Endothelial cell of umbilical vein (primary cell): ENCODE measurements at regions of chr22 and their contacts with region 1.

Region 1: DNA sequence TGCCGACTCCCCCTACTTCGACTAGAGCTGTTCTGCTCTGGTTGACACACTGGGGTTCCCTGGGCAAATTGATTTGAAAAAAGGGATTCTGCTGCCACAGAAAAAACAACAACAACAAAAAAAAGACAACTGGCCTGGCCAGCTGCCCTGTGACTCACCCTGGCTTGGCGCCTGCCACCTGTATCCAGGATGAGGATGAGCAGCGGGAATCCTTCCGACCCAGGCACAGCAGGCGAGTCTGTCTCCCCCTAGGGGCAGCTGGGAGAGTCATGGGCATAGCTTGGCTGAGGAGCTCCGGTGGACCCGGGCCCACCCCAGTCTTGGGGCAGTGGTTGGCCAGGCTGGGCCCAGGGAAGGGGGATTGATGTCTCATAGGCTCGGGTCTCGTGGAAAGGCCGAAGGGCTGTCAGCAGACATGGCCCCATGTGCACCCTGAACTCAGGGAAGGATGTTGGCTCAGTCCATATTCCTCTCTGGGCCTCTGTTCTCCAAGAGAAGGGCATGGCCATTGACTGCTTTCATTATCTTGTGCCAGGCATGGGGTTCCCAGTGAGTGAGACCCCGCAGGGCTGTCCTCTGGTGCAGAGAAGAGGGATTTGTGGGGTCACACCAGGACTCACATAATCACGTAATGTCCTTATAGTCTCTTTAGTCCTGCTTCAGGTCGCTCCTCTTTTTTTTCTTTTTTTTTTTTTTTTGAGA is 10.4 kb upstream of the SUN2 start:
- DNase-seq: peak; percentile 30
- H3K4me3 ChIP-seq: no peak overlapping the region
- H3K27ac ChIP-seq: no peak overlapping the region
- H3K4me1 ChIP-seq: no peaks in the 10 kb centered on the region
- H3K27me3 ChIP-seq: no peaks in the 10 kb centered on the region
- CTCF ChIP-seq: peak; percentile 84 to 90
- POLR2A ChIP-seq: no peak

Region 2: GRCh38 chr22:38631724-38632123 is 134.5 kb before region 1 on chr22:
- CTCF ChIA-PET with region 1: no interaction called
- POLR2A ChIA-PET with region 1: no interaction called
- dilution Hi-C with region 1: no loop called
- intact Hi-C with region 1: no loop called
- DNase-seq: no peak
- H3K4me3 ChIP-seq: no peak overlapping the region
- H3K27ac ChIP-seq: no peak overlapping the region
- H3K4me1 ChIP-seq: no peaks in the 10 kb centered on the region
- H3K27me3 ChIP-seq: no peaks in the 10 kb centered on the region
- CTCF ChIP-seq: no peak
- POLR2A ChIP-seq: no peak

Region 3: DNA sequence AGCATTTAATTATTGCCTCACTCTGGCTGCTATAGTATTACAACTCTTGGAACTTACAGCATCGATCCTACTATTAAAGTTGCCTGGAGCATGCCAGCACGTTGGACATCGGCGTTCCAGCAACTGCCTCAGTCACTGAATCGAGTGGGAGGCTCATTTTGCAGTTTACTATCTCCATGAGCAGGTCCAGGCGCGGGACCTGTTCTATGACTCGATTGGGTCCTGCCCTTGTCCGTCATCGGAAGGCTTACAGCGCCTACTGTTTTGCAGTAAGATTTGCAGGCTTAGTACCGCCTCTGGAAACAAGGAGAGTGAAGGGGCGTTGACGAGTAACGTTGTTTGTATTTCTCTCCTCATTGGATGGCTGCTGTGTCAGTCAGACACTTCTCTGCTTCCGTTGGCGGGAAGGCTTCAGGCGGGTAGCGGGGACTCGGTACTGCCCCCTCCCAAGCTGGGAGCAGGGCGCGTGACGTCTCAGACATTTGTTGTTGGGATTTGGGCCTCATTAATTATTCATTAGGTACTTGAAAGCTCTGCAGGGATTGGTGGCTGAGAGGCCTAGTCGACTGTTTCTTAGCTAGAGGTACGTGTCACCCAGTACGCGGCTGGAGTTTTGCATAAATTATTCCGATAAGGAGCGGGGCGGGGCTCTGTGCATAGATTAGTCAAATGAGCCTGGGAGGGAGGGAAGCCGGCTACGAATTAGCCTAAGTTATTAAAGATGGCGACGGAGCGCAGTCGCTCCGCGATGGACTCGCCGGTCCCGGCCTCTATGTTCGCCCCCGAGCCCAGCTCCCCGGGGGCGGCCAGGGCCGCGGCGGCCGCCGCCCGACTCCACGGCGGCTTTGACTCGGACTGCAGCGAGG is 60.8 kb before region 1 on chr22 and contains the start of gene GTPBP1:
- CTCF ChIA-PET with region 1: no interaction called
- POLR2A ChIA-PET with region 1: no interaction called
- dilution Hi-C with region 1: no loop called
- intact Hi-C with region 1: no loop called
- DNase-seq: peak; percentile 100
- H3K4me3 ChIP-seq: peak within 1 kb of the TSS; percentile 84 to 95 (median 89)
- H3K27ac ChIP-seq: peak within 1 kb of the TSS; percentile 67
- H3K4me1 ChIP-seq: peaks cover 33% of the 10 kb centered on the region
- H3K27me3 ChIP-seq: no peaks in the 10 kb centered on the region
- CTCF ChIP-seq: no peak
- POLR2A ChIP-seq: peak; percentile 85
- total RNA-seq, gene GTPBP1: 43.9 and 50.3 TPM in 2 replicates

Region 4: GRCh38 chr22:38755911-38756532 is 10.2 kb before region 1 on chr22 and contains the start of gene SUN2:
- CTCF ChIA-PET with region 1: interaction called, 29 read pairs
- POLR2A ChIA-PET with region 1: no interaction called
- dilution Hi-C with region 1: no loop called
- intact Hi-C with region 1: no loop called
- DNase-seq: peak; percentile 88
- H3K4me3 ChIP-seq: peak within 1 kb of the TSS; percentile 55 to 74 (median 58)
- H3K27ac ChIP-seq: peak within 1 kb of the TSS; percentile 63
- H3K4me1 ChIP-seq: peaks cover 22% of the 10 kb centered on the region
- H3K27me3 ChIP-seq: no peaks in the 10 kb centered on the region
- CTCF ChIP-seq: no peak
- POLR2A ChIP-seq: peak; percentile 36
- total RNA-seq, gene SUN2: 133 and 137 TPM in 2 replicates

Region 5: DNA sequence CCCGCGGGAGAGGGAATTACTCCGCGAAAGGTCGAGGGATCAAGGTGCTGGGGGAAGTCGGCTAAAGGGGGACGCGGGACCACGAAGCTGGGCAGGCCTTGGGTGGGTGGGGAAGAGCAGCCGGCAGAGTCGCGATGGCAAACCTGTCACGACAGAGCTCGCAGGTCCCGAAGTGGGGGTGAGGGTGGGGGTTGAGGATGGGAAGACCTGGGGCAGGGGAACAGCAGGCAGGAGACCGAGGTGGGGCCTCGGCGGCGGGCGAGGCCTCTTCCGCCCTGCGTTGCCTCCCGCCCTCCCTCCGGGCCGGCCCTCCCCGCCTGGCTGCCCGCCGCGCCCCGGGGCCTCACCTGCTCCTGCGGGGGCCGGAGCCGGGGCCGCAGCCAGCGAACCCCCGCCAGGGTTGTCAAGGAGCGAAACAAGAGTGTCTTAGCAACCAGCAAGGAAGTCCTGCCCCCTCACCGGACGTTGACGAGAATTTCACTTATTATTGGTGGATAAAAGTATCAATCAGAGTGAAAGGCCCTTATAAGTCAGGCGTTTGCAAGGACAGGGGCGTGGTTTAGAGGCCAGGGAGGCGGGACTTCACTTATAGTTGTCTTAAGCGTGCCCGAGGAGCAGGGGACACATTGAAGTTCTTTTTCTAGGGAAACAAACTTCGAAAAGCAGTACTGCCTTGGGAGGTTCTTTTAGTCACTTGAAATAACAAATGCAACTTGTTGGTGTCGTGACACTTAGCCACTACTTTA is 27.7 kb after region 1 on chr22 and contains the start of gene DNAL4:
- CTCF ChIA-PET with region 1: interaction called, 23 read pairs
- POLR2A ChIA-PET with region 1: no interaction called
- dilution Hi-C with region 1: no loop called
- intact Hi-C with region 1: no loop called
- DNase-seq: peak; percentile 99
- H3K4me3 ChIP-seq: peak within 1 kb of the TSS; percentile 60 to 86 (median 72)
- H3K27ac ChIP-seq: peak within 1 kb of the TSS; percentile 16
- H3K4me1 ChIP-seq: peaks cover 10% of the 10 kb centered on the region
- H3K27me3 ChIP-seq: peaks cover 0 to 2% of the 10 kb centered on the region in 2 experiments
- CTCF ChIP-seq: no peak
- POLR2A ChIP-seq: peak; percentile 32
- total RNA-seq, gene DNAL4: 12.2 and 12.9 TPM in 2 replicates

Region 6: DNA sequence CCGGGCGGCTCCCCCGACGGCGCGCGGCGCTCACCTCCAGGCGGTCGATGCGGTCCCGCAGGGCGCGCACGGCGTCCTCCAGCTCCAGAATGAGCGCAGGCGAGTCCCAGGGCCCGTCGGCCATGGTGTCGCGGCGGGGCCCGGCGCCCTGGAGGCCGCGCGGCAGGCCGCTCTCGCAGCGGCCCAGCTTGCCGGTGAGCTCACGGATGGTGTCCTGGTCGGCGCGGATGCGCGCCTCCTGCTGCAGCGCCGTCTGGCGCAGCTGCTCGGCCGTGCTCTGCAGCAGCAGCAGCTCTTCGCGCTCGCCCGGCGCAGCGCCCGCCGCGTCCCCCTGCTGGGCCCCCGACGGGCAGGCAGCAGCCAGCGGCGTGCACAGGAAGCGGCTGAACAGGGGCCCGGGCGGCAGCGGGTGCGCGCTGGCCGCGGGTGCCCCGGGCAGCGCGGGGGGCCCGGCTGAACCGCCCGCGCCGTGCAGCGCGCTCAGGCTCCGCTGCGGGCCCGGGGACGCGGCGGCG is 77.0 kb after region 1 on chr22:
- CTCF ChIA-PET with region 1: interaction called, 198 read pairs
- POLR2A ChIA-PET with region 1: no interaction called
- dilution Hi-C with region 1: no loop called
- intact Hi-C with region 1: loop called (anchors 1 kb)
- DNase-seq: peak; percentile 64
- H3K4me3 ChIP-seq: no peak overlapping the region
- H3K27ac ChIP-seq: no peak overlapping the region
- H3K4me1 ChIP-seq: peaks cover 3% of the 10 kb centered on the region
- H3K27me3 ChIP-seq: peaks cover 20 to 29% of the 10 kb centered on the region in 2 experiments
- CTCF ChIP-seq: peak; percentile 21 to 40
- POLR2A ChIP-seq: no peak

Region 7: DNA sequence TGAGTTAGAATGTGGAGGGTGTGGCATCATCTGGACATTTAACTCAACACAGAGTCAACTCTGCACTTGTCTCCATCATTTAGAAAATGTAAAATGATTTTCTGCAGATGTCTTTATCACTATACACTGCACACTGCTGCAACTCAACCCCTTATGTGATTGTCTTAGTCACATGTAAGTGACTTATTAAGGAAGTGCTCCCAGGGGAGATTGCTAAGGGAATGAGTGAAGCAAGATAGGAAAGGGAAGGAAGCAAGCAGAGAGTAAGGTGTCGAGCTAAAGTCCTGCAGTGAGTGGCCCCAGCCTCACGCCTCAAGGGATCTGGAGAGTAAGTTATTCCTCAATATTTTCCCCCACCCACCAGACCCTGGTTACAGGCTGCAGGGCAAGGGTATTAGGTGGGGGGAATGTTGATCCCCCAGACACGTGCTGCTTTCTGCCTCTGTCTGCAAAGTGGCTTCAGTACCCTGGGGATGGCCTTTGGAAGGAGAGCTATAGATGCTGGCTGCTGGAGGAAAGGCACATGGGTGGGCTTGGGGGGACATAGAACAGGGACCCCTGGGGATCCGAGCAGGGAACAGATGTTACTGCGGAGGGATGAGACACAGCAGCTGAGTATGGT is 113.0 kb after region 1 on chr22:
- CTCF ChIA-PET with region 1: interaction called, 13 read pairs
- POLR2A ChIA-PET with region 1: no interaction called
- dilution Hi-C with region 1: no loop called
- intact Hi-C with region 1: no loop called
- DNase-seq: no peak
- H3K4me3 ChIP-seq: no peak overlapping the region
- H3K27ac ChIP-seq: no peak overlapping the region
- H3K4me1 ChIP-seq: no peaks in the 10 kb centered on the region
- H3K27me3 ChIP-seq: peaks cover 26 to 27% of the 10 kb centered on the region in 2 experiments
- CTCF ChIP-seq: no peak
- POLR2A ChIP-seq: no peak

Region 8: GRCh38 chr22:39021552-39022250 is 255.5 kb after region 1 on chr22:
- CTCF ChIA-PET with region 1: interaction called, 10 read pairs
- POLR2A ChIA-PET with region 1: no interaction called
- dilution Hi-C with region 1: no loop called
- intact Hi-C with region 1: no loop called
- DNase-seq: no peak
- H3K4me3 ChIP-seq: peak overlapping the region; percentile 1 to 42 (median 23)
- H3K27ac ChIP-seq: peak overlapping the region; percentile 47
- H3K4me1 ChIP-seq: no peaks in the 10 kb centered on the region
- H3K27me3 ChIP-seq: no peaks in the 10 kb centered on the region
- CTCF ChIP-seq: no peak
- POLR2A ChIP-seq: no peak

Region 9: DNA sequence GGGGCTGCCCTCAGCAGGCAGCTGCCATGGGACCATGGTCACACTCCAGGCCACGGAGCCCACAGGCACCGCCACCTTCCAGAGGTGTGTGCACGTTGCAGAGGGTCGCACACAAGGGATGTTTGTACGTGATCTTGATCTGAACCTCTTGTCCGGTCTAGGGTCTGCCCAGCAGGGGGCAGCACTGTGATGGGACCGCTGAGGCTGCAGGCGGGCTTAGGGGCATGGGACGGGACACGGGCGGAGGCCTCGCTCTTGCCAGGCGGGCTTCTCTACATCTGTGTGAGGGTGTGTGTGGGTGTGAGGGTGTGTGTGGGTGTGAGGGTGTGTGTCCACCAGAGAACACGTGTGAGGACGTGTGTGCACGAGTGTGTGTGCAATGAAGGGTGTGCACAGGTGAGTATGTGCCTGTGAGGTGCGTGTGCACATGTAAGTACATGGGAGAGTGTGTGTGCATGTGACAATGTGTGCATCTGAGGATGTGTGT is 856.7 kb after region 1 on chr22:
- CTCF ChIA-PET with region 1: no interaction called
- POLR2A ChIA-PET with region 1: no interaction called
- dilution Hi-C with region 1: no loop called
- intact Hi-C with region 1: no loop called
- DNase-seq: peak; percentile 28
- H3K4me3 ChIP-seq: no peak overlapping the region
- H3K27ac ChIP-seq: no peak overlapping the region
- H3K4me1 ChIP-seq: no peaks in the 10 kb centered on the region
- H3K27me3 ChIP-seq: peaks cover 0 to 7% of the 10 kb centered on the region in 2 experiments
- CTCF ChIP-seq: peak; percentile 51 to 66
- POLR2A ChIP-seq: no peak